Activated CD4-positive, alpha-beta memory T cell treated with anti-CD3 and anti-CD28 coated beads for 36 hours (primary cell): ENCODE measurements at regions of chr1 and their contacts with region 1.

Region 1: DNA sequence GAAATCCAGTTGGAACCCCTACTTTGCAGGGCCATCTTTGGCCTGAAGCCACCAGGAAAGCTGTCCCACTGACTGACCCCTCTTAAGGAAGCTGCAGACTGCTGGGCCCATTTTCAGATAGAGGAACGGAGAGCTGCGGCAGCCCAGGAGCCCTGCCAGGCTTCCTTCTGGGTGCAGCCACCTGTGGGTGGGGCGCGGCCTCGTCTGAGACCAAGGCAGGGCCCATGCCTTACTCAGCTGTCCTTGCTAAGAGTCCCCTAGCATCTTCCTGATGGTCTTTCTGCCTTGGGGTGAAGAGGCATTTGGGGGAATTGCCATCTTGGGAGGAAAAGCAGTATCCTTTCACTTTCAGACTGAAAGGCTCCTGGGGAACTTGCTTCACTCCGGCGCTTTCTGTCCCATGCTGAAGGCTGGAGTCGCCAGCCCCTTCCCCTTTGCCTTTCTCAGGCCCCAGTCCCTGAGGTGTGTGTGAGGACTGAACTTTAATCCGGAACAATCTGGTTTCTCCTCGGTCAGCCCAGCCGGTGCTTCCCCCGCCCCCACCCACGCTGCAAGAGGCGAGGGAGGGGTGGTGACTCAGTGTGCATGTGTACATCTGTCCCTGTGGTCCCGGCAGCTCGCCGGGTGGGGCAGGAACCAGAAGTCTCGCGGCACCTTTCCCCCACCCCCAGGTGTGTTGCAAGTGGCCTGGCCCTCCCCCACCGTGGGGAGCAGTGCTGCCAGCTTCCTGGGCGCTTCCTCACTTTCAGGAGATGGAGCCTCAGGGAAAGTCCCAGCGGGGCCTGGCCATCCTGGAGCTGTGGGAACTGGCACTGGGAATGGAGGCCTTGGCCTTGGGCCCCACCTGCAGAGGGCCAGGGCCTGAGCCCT is 5.1 kb downstream of the ZC3H12A start:
- DNase-seq: peak; percentile 97
- H3K4me3 Mint-ChIP-seq: peak overlapping the region; percentile 94
- H3K27ac Mint-ChIP-seq: peak overlapping the region; percentile 100
- H3K4me1 Mint-ChIP-seq: peaks cover 38% of the 10 kb centered on the region
- H3K27me3 Mint-ChIP-seq: no peaks in the 10 kb centered on the region

Region 2: DNA sequence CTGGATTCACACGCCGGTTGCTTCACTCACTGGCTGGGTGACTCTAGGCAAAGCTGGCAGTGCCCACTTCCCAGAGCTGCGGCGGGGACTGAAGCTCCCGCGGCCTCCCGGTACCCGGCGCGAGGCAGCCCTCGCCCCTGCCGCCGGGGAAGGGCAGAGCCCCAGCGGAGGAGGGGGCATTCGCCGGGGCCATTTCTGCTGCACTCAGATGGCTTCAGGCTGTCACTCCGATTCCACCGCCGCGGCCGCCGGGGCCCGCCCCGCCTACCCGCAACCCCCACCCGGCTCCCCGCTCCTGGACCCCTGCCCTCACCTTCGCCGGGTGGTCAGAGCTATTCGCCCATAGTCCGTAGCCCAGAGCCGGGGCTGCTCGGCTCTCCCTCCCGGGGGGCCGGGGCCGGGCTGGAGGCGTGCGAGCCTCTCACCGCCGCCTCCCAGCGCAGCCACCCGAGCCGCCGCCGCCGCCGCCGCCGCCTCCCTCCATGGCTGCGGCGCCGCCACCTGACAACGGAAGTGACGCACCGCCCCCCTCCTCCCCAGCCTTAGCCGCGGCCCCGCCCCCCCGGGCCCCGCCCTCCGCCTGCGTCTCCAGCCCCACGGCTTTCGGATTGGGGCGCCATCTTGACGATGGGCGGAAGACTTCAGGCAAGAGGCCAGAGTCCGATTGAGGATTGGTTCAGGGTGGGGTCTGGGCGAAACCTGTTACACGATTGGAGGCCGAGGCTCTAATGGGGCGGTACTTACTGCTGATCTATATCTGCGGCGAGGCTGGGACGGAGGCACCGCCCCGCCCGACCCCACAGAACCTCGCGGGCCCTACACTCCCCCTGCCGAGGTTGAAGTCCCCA is 1093.9 kb before region 1 on chr1 and contains the start of gene STK40:
- CTCF ChIA-PET with region 1: no interaction called
- POLR2A ChIA-PET with region 1: no interaction called
- intact Hi-C with region 1: loop called (anchors 5 kb)
- DNase-seq: peak; percentile 99
- H3K4me3 Mint-ChIP-seq: peak within 1 kb of the TSS; percentile 93
- H3K27ac Mint-ChIP-seq: peak within 1 kb of the TSS; percentile 100
- H3K4me1 Mint-ChIP-seq: peaks cover 56% of the 10 kb centered on the region
- H3K27me3 Mint-ChIP-seq: no peaks in the 10 kb centered on the region
- total RNA-seq, gene STK40: 57.3 to 57.4 TPM

Region 3: DNA sequence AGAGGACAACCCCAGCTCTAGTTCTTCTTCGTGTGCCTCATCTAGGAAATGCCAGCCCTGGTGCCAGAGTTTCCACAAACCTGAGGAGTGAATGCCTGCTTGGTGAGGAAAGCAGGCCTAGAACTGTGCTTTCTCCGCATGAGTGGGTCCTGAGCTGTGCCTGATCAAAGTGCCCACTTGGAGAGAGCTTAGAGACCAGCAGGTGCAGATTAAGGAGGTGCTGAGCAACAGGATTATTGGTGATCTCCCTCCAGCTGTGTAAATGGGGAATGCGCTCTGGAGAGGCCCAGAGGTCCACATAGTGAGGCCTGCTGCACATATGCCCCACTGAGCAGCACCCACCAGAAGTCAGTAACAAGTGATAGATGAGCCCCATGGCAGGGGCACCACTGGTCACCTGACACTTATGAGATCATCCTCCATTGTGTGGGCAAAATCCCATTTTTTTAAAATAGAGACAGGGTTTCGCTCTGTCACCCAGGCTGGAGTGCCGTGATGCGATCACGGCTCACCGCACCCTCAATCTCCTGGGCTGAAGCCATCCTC is 132.3 kb before region 1 on chr1:
- CTCF ChIA-PET with region 1: no interaction called
- POLR2A ChIA-PET with region 1: no interaction called
- intact Hi-C with region 1: no loop called
- DNase-seq: no peak
- H3K4me3 Mint-ChIP-seq: no peak overlapping the region
- H3K27ac Mint-ChIP-seq: no peak overlapping the region
- H3K4me1 Mint-ChIP-seq: no peaks in the 10 kb centered on the region
- H3K27me3 Mint-ChIP-seq: peaks cover 2% of the 10 kb centered on the region

Region 4: DNA sequence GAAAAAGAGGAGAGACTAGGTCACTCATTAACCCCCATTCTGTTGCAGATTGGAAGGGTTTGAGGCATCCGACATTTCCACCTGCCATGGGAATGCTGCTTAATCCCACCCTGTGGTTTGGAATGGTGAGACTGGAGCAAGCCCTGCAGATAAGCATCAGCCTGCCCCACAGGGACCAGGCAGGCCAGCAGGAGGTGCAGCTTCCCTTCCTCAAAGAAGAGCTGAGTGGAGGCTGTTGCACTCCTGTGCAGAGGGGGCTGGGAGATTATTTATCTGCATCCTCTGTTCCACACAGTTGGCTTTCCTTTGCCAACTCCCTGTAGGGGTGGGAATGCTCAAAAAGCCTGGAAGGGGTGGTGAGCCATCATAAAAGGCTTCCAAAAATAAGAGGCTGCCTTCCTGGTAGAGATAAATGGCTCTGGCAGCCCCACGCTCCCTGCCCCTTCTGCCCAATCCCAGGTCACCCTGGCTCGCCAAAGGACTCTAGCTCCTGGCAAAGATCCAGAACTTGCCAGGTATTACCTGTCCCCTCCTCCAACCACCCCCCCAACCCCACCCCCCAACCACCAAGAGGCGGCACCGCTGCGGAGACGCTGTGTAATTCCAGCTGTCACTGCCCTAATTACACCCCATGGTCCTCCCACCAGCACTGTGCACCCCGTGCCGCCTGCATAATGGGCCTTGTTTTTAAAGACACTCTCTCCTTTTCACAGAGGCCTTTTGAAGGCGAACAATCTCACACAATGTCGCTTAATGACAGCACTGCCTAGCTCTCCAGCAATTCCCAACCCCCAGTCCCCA is 88.1 kb before region 1 on chr1:
- CTCF ChIA-PET with region 1: no interaction called
- POLR2A ChIA-PET with region 1: no interaction called
- intact Hi-C with region 1: no loop called
- DNase-seq: no peak
- H3K4me3 Mint-ChIP-seq: no peak overlapping the region
- H3K27ac Mint-ChIP-seq: no peak overlapping the region
- H3K4me1 Mint-ChIP-seq: no peaks in the 10 kb centered on the region
- H3K27me3 Mint-ChIP-seq: peaks cover 20% of the 10 kb centered on the region

Region 5: DNA sequence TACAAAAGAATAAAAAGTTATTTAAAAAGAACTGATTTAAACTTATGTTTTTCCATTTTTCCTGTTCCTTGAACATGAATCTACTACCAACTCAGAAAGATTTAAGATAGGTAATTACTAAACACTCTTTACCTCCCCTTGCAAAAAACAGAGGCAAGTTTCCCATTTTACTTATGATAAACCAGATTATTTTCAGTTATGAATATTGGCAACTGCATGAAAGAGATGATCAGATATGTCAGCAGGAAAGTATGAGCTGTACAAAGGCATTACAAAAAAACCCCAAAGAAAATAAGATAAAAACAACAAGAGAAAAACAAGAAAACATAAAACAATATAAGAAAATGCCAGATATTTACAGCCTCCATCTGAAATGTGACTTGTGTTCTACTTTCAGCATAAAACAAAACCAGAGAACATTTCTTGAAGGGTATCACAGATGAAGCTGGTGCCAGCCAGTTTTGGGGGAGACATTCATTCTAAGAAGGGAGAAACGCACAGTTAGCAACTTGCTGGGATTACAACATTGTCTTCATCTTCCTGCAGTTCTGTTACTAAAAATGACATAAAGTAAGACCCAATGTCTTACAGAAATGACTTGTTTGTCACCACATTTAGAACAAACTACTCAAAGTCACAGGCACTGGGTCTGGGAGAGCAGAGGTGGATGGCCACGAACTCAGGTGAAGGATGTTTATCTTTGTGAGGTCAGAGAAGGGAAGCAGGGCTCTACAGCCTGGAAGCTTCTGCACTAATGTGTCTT is 14.0 kb after region 1 on chr1:
- CTCF ChIA-PET with region 1: interaction called, 157 read pairs
- POLR2A ChIA-PET with region 1: interaction called, 8 read pairs
- intact Hi-C with region 1: loop called (anchors 1 kb)
- DNase-seq: peak; percentile 54
- H3K4me3 Mint-ChIP-seq: peak overlapping the region; percentile 2
- H3K27ac Mint-ChIP-seq: peak overlapping the region; percentile 81
- H3K4me1 Mint-ChIP-seq: peaks cover 30% of the 10 kb centered on the region
- H3K27me3 Mint-ChIP-seq: no peaks in the 10 kb centered on the region

Region 6: DNA sequence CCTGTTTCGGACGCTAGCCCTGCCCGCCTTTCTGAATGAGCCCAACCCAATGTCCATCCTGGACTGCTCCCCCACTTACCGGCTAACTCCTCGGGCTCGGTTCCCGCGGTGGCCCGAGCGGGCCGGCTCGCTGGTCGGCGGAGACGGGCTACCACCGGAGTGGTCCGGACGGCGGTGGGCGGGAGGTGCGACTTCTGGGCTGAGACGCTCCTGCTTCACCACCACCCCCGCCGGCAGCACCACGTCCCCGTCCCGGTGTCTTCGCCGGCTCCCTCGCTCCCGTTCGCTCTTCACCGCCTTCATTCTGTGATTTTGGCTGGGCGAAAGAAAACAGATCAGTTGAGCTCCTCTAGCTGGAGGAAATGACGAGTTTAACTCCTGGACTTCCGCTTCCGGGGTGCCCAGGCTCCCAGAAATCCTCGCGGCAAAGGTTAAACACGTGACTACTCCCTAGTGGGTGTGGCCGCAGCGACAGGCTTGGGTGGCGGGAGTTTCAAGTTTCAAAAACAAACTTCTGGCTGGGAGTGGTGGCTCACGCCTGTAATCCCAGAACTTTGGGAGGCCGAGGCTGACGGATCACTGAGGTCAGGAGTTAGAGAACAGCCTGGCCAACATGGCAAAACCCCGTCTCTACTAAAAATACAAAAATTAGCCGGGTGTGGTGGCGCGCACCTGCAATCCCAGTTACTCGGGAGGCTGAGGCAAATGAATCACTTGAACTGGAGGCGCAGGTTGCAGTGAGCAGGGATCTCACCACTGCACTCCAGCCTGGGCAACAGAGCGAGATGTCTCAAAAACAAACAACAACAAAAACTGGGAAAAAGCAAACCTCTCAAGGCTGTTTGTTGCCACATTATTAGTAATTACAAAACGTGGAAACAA is 74.7 kb after region 1 on chr1 and contains the start of gene SNIP1:
- CTCF ChIA-PET with region 1: no interaction called
- POLR2A ChIA-PET with region 1: interaction called, 3 read pairs
- intact Hi-C with region 1: loop called (anchors 2 kb)
- DNase-seq: peak; percentile 95
- H3K4me3 Mint-ChIP-seq: peak within 1 kb of the TSS; percentile 91
- H3K27ac Mint-ChIP-seq: peak within 1 kb of the TSS; percentile 93
- H3K4me1 Mint-ChIP-seq: peaks cover 45% of the 10 kb centered on the region
- H3K27me3 Mint-ChIP-seq: no peaks in the 10 kb centered on the region
- total RNA-seq, gene SNIP1: 18.1 to 19.0 TPM

Region 7: DNA sequence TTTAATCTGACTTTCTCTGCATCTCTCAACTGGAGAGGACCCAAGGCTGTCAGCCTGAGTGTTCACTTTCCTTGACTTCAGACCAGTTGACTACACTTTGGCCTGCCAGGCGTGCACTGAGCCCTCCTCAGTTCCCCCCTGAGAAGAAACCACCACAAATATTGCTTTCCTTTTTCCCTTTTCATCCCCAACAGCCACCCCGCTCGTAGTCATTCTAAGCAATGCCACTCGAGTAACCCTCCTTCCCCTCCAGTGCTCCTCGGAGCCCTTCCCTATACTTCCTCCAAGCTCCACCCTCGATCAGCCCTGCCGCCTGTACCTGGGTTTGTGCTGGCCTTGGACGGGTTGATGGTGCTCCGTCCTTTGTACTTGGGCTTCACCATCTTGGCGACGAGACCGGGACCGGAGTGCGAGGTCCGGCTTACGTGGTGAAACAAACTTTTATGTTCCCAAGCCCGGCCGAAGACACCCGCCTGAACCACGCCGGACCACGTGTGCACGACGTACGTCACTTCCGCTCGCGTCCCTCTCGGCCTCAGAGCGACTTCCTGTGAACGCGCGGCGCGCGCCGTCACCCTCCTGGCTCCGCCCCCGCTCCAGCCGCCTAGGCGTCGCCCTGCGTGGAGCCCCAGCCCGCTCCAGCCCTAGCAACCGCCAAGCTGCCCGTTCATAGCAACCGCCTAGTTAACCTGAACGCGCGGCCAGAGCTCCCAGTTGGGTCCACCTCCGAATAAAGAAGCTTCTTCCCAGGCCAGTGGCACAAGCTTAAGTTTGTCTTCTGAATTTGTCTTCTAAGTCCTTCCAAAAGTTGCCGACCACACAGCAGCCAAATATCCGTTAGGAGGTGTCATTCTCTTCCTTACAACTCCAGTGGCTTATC is 116.2 kb after region 1 on chr1 and contains the start of gene GNL2:
- CTCF ChIA-PET with region 1: no interaction called
- POLR2A ChIA-PET with region 1: interaction called, 3 read pairs
- intact Hi-C with region 1: loop called (anchors 5 kb)
- DNase-seq: peak; percentile 98
- H3K4me3 Mint-ChIP-seq: peak within 1 kb of the TSS; percentile 100
- H3K27ac Mint-ChIP-seq: peak within 1 kb of the TSS; percentile 98
- H3K4me1 Mint-ChIP-seq: peaks cover 37% of the 10 kb centered on the region
- H3K27me3 Mint-ChIP-seq: no peaks in the 10 kb centered on the region
- total RNA-seq, gene GNL2: 70.7 to 71.2 TPM

Region 8: GRCh38 chr1:37807555-37808368 is 328.3 kb after region 1 on chr1 and contains the starts of genes C1orf122 and YRDC:
- CTCF ChIA-PET with region 1: no interaction called
- POLR2A ChIA-PET with region 1: interaction called, 4 read pairs
- intact Hi-C with region 1: loop called (anchors 5 kb)
- DNase-seq: peak; percentile 95
- H3K4me3 Mint-ChIP-seq: peak within 1 kb of the TSS; percentile 95
- H3K27ac Mint-ChIP-seq: peak within 1 kb of the TSS; percentile 96
- H3K4me1 Mint-ChIP-seq: peaks cover 40% of the 10 kb centered on the region
- H3K27me3 Mint-ChIP-seq: no peaks in the 10 kb centered on the region
- total RNA-seq, gene C1orf122: 18.1 to 19.7 TPM
- total RNA-seq, gene YRDC: 34.1 to 36.1 TPM

Region 9: DNA sequence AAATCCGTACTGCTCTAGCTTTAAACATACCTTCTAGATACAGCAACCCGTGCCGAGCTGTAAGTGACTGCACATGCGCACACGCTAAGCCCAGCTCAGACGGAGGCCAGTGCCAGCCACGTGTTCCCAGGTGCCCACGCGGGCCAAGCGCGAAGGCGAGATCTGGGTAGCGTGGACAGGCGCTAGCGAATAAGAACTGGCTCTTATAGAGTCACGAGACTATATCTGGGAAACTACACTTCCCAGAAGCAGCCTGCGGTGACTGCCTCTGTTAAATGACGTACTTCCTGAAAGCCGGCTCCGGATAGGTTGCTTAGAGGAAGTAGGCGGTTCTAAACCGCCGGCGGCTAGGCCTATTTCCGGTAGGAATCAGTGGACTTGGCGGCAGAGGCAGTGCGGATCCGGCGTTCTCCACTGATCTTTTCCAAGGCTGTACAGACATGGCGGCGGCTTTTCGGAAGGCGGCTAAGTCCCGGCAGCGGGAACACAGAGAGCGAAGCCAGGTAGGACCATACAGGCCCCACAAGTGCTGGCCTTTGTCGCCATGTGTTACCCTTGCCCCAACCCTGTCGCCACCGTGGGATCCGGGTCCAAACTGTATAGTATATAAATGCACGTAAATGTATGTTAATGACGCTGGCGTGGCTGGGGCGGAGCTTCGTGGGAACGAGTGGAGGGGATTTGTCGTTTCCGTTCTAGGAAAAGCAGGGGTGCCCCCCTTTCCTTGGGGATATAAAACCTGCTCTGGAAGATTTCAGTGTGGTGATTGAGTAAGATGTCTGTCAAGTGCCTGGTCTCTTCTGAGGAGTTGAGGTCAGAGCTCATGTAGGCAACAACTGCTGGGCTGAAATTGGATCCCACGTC is 533.1 kb after region 1 on chr1 and contains the start of gene UTP11:
- CTCF ChIA-PET with region 1: no interaction called
- POLR2A ChIA-PET with region 1: no interaction called
- intact Hi-C with region 1: loop called (anchors 2 kb)
- DNase-seq: peak; percentile 95
- H3K4me3 Mint-ChIP-seq: peak within 1 kb of the TSS; percentile 98
- H3K27ac Mint-ChIP-seq: peak within 1 kb of the TSS; percentile 95
- H3K4me1 Mint-ChIP-seq: peaks cover 58% of the 10 kb centered on the region
- H3K27me3 Mint-ChIP-seq: no peaks in the 10 kb centered on the region
- total RNA-seq, gene UTP11: 51.2 to 52.3 TPM